ENCODE measurements at regions of chr6 and their contacts with region 1.

Region 1: DNA sequence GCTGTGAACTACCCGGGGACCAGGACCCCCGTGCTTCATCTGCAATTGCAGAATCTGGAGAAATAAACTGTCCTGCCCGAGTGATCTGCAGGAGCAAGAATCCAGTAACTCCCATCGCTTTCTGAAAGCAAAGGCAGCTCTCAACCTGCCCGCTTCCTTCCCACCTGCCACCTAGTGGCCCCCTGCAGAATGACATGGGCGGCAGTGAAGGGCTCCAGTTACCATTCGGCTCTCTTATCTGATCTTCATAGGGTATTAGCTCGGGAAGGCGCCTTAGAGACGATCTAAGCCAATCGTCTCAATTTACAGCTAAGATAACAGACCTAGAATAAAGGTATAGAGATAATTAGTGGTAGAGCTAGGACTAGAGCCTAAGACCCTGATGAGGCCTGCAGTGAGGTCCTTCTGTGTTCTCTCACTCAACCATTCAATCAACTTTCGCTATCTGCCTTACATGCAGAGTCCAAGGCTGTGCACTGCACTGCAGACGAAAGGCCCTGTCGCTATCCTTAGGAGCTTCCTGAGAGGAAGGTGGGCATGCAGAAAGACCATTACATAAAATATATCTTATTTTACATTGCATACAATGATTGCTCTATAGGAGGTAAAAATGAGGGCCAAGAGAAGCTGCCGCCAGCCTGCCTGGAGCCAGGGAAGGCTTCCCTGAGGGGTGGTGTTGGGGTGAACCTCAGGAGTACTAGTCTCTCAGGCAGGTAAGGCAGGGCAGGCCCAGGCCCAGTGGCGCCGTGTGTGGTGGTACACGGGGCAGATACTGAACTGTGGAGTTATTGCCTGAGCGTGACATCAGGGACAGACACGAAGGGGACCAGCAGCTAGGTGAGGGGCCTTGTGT is 7.1 kb upstream of the PSMG4 start:
- DNase-seq: peak; percentile 65 to 88
- ATAC-seq: peak; percentile 84 to 99 (median 97)
- H3K4me3 ChIP-seq: no peak overlapping the region
- H3K4me3 Mint-ChIP-seq: no peak overlapping the region
- H3K27ac ChIP-seq: no peak overlapping the region
- H3K27ac Mint-ChIP-seq: peak overlapping the region in 1 of 2 donors; percentile 64
- H3K4me1 ChIP-seq: peaks cover 10% of the 10 kb centered on the region
- H3K4me1 Mint-ChIP-seq: peaks cover 8 to 12% of the 10 kb centered on the region in 2 donors
- H3K27me3 ChIP-seq: peaks cover 3% of the 10 kb centered on the region
- H3K27me3 Mint-ChIP-seq: peaks cover 35 to 40% of the 10 kb centered on the region in 2 donors
- CTCF ChIP-seq: peak; percentile 98

Region 2: GRCh38 chr6:3022765-3023662 is 228.7 kb before region 1 on chr6:
- intact Hi-C with region 1: no loop called
- DNase-seq: peak in 1 of 2 donors; percentile 57
- ATAC-seq: peak; percentile 5 to 27 (median 10)
- H3K4me3 ChIP-seq: peak overlapping the region; percentile 59
- H3K4me3 Mint-ChIP-seq: peak overlapping the region; percentile 99
- H3K27ac ChIP-seq: peak overlapping the region; percentile 92
- H3K27ac Mint-ChIP-seq: peak overlapping the region; percentile 86 to 96
- H3K4me1 ChIP-seq: peaks cover 61% of the 10 kb centered on the region
- H3K4me1 Mint-ChIP-seq: peaks cover 37 to 44% of the 10 kb centered on the region in 2 donors
- H3K27me3 ChIP-seq: no peaks in the 10 kb centered on the region
- H3K27me3 Mint-ChIP-seq: no peaks in the 10 kb centered on the region
- CTCF ChIP-seq: no peak

Region 3: DNA sequence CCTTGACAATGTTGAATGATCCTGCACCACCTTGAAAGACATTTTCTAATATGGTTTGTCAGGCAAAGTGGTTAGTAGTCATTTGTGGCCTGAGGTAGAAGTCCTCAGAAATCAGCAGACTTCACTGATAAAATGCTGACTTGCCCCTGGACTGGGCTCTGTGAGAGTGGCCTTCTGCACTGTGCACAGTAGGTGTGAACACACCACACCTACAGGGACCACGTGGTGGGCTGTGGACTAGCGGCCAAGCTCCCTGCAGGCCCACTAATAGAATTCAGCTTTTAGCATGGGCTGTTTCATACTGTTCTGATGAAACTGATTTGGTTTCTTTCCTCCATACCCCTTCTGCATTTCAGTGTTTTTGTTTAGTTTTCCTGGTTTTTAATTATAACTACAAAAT is 125.9 kb before region 1 on chr6:
- intact Hi-C with region 1: loop called (anchors 1 kb)
- DNase-seq: no peak
- ATAC-seq: no peak
- H3K4me3 ChIP-seq: no peak overlapping the region
- H3K4me3 Mint-ChIP-seq: no peak overlapping the region
- H3K27ac ChIP-seq: no peak overlapping the region
- H3K27ac Mint-ChIP-seq: no peak overlapping the region
- H3K4me1 ChIP-seq: peaks cover 3% of the 10 kb centered on the region
- H3K4me1 Mint-ChIP-seq: no peaks in the 10 kb centered on the region
- H3K27me3 ChIP-seq: no peaks in the 10 kb centered on the region
- H3K27me3 Mint-ChIP-seq: no peaks in the 10 kb centered on the region
- CTCF ChIP-seq: no peak